ENCODE measurements at regions of chr12 and their contacts with region 1.

Region 1: DNA sequence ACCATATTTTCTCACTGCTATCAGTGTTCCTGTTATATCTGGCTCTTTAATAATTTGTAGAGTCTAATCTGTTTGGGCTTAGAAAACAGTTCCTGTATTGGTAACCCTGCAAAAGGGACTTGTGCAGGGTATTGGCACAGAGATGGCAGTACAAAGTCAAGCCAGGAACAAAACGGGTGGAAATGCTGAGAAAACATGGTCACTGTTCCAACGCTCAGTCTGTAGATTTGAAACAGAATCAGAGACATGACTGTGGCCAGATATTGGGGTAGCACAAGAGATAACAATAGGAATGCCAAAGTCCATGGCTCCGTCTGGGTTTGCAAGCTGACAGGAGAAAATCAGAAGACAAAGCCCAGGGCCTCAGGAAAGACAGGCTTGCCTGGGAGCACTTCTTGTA is 290.7 kb upstream of the PDE3A start:
- DNase-seq: no peak
- H3K4me3 ChIP-seq: no peak overlapping the region
- H3K27ac ChIP-seq: no peak overlapping the region
- H3K4me1 ChIP-seq: no peaks in the 10 kb centered on the region
- H3K27me3 ChIP-seq: no peaks in the 10 kb centered on the region
- CTCF ChIP-seq: no peak
- POLR2A ChIP-seq: no peak

Region 2: DNA sequence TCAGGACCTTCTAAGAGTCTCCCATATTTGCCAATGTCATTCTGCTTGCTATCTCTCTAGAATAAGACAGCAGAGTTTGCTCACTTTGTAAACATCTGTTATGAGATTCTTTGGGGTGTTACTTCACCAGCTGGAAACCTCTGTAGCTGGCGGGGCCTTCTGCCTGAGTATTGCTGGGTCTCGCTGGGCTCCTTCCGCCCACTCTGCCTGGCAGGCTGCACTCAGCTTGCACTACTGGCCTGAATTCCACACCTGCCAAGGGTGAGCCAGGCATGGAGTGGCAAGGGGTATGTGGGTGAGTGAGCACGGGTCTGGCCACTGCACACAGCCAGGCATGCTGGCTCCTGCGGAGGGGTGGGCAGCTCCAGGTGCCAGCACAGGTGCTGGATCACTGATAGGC is 23.4 kb after region 1 on chr12:
- CTCF ChIA-PET with region 1: no interaction called
- POLR2A ChIA-PET with region 1: interaction called, 10 read pairs
- dilution Hi-C with region 1: no loop called
- intact Hi-C with region 1: no loop called
- DNase-seq: no peak
- H3K4me3 ChIP-seq: no peak overlapping the region
- H3K27ac ChIP-seq: no peak overlapping the region
- H3K4me1 ChIP-seq: peaks cover 2% of the 10 kb centered on the region
- H3K27me3 ChIP-seq: no peaks in the 10 kb centered on the region
- CTCF ChIP-seq: no peak
- POLR2A ChIP-seq: no peak

Measured in endothelial cell of umbilical vein (primary cell).